HCT116 (cell line): ENCODE measurements at regions of chr20 and their contacts with region 1.

Region 1: GRCh38 chr20:63682384-63683139 is 13.9 kb upstream of the TNFRSF6B start:
- DNase-seq: peak; percentile 97
- ATAC-seq: peak; percentile 91
- H3K4me3 ChIP-seq: peak overlapping the region; percentile 24 to 51
- H3K27ac ChIP-seq: peak overlapping the region; percentile 100
- H3K4me1 ChIP-seq: peaks cover 59 to 71% of the 10 kb centered on the region in 2 experiments
- H3K27me3 ChIP-seq: no peaks in the 10 kb centered on the region
- CTCF ChIP-seq: no peak
- POLR2A ChIP-seq: peak; percentile 49
- RAD21 ChIP-seq: no peak

Region 2: GRCh38 chr20:63594043-63594561 is 88.5 kb before region 1 on chr20:
- CTCF ChIA-PET with region 1: no interaction called
- POLR2A ChIA-PET with region 1: no interaction called
- RAD21 ChIA-PET with region 1: no interaction called
- intact Hi-C with region 1: no loop called
- DNase-seq: no peak
- ATAC-seq: peak; percentile 30; the same call in 1 of the 2 replicates
- H3K4me3 ChIP-seq: no peak overlapping the region
- H3K27ac ChIP-seq: no peak overlapping the region
- H3K4me1 ChIP-seq: peaks cover 0 to 8% of the 10 kb centered on the region in 2 experiments; a peak in 2 of 4 replicates
- H3K27me3 ChIP-seq: no peaks in the 10 kb centered on the region
- CTCF ChIP-seq: no peak
- POLR2A ChIP-seq: no peak
- RAD21 ChIP-seq: no peak

Region 3: GRCh38 chr20:63641792-63642544 is 40.6 kb before region 1 on chr20:
- CTCF ChIA-PET with region 1: interaction called, 3 read pairs
- POLR2A ChIA-PET with region 1: interaction called, 7 read pairs
- RAD21 ChIA-PET with region 1: interaction called, 5 to 14 read pairs
- intact Hi-C with region 1: no loop called
- DNase-seq: peak; percentile 79
- ATAC-seq: peak; percentile 83
- H3K4me3 ChIP-seq: peak overlapping the region; percentile 40 to 59
- H3K27ac ChIP-seq: peak overlapping the region; percentile 98
- H3K4me1 ChIP-seq: peaks cover 11 to 34% of the 10 kb centered on the region in 2 experiments
- H3K27me3 ChIP-seq: no peaks in the 10 kb centered on the region
- CTCF ChIP-seq: peak in 2 of 3 experiments; percentile 36 to 52; a peak in 4 of 6 replicates
- POLR2A ChIP-seq: peak; percentile 30
- RAD21 ChIP-seq: no peak; the same call in 1 of the 2 replicates